IMR-90 (cell line): ENCODE measurements at regions of chr2 and their contacts with region 1.

Region 1: DNA sequence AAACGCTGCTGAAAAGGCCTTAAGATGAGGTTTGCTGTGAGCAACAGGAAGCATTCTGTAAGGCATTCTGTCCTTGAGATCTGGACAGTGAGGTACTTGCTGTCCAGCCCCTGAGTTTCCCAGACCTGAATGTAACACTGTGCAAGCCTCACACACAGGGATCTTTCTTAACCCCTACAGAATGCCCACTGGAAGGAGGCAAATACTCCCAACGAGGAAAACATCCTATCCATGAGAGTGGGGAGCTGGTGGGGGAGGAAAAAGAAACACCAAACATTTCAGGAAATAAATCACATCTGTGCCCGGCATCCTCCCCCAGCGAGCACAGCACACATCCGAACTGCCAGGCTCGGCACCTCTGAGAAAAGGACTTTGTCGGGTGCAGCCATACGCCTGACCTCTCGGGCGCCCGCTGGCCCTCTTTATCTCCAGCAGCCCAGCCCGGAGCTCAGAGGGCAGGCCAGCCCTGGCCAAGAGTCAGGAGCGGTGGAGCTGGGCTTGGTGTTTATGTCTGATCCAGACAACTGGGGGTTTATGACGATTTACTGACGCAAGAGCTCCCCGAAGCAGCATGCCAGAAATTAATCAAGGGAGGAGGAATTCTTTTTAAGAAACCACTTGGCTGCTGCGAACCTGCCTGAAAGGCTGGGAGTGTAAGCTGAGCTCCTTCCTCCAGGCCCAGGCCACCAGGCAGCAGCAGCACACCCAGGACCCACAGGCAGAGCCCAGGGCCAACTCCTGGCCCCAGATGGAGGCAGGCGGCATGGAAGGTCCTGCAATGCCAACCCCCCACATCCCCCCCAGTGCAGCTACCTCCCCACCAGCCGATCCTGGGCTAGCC is 72.2 kb downstream of the HDAC4 start:
- DNase-seq: peak; percentile 98
- ATAC-seq: peak; percentile 84
- H3K4me3 ChIP-seq: no peak overlapping the region
- H3K27ac ChIP-seq: peak overlapping the region; percentile 97
- H3K4me1 ChIP-seq: peaks cover 46% of the 10 kb centered on the region
- H3K27me3 ChIP-seq: no peaks in the 10 kb centered on the region
- CTCF ChIP-seq: peak; percentile 26; the same call in 1 of the 2 replicates
- POLR2A ChIP-seq: peak; percentile 73; the same call in 1 of the 2 replicates
- RAD21 ChIP-seq: peak; percentile 40

Region 2: GRCh38 chr2:238974501-238975166 is 353.9 kb before region 1 on chr2:
- CTCF ChIA-PET with region 1: no interaction called
- POLR2A ChIA-PET with region 1: no interaction called
- dilution Hi-C with region 1: no loop called
- in situ Hi-C with region 1: no loop called
- intact Hi-C with region 1: no loop called
- DNase-seq: peak; percentile 92
- ATAC-seq: peak; percentile 62
- H3K4me3 ChIP-seq: no peak overlapping the region
- H3K27ac ChIP-seq: peak overlapping the region; percentile 48; the same call in 1 of the 2 replicates
- H3K4me1 ChIP-seq: peaks cover 10% of the 10 kb centered on the region
- H3K27me3 ChIP-seq: no peaks in the 10 kb centered on the region; the same call in 1 of the 2 replicates
- CTCF ChIP-seq: peak; percentile 51
- POLR2A ChIP-seq: no peak
- RAD21 ChIP-seq: 0 out of 2 replicates have a peak, but pooled peaks have one; percentile 25

Region 3: GRCh38 chr2:239234191-239235175 is 94.1 kb before region 1 on chr2:
- CTCF ChIA-PET with region 1: no interaction called
- POLR2A ChIA-PET with region 1: no interaction called
- dilution Hi-C with region 1: no loop called
- in situ Hi-C with region 1: no loop called
- intact Hi-C with region 1: no loop called
- DNase-seq: no peak
- ATAC-seq: no peak
- H3K4me3 ChIP-seq: no peak overlapping the region
- H3K27ac ChIP-seq: no peak overlapping the region
- H3K4me1 ChIP-seq: peaks cover under 1% of the 10 kb centered on the region; the same call in 1 of the 2 replicates
- H3K27me3 ChIP-seq: no peaks in the 10 kb centered on the region
- CTCF ChIP-seq: no peak
- POLR2A ChIP-seq: no peak
- RAD21 ChIP-seq: no peak

Region 4: DNA sequence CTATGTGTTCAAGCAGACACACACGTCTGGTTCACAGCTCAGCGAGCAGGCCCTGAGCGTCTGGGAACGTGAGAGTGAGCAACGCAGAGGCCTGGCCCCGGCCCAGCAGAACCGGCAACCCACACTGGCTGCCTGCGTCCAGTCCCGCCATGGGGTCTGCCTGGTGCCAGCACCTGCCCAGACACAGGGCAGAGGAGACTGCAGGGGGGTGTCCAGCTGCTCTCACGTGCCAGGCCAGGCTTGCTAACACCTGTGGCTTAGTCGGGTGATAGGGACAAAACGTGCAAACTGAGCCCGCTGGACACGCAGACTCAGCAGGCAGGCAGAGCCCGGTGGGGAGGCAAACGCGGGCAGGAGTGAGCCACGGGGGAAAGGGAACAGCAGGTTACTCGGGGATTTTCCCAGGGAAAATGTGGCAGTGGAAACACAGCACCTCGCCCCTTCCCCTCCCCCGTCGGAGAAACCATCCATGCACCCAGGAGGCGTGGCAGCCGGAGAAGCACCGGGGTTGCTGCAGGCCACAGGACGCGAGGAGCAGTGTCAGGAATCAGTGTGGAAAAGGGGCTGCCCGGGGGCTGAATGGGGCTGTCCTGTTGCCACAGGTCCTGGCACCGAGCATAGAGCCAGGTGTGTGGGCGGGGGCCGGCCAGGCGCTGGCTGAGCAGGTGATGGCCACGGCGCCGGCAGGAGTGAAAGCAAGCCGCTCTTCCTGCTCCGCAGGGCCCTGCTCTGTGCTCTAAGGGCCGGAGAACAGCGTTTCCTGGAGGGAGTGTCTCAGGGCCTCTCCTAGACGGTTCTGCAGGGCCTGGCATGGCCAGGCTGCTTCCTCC is 82.5 kb before region 1 on chr2:
- CTCF ChIA-PET with region 1: no interaction called
- POLR2A ChIA-PET with region 1: no interaction called
- dilution Hi-C with region 1: no loop called
- in situ Hi-C with region 1: no loop called
- intact Hi-C with region 1: no loop called
- DNase-seq: no peak
- ATAC-seq: no peak
- H3K4me3 ChIP-seq: no peak overlapping the region
- H3K27ac ChIP-seq: no peak overlapping the region
- H3K4me1 ChIP-seq: peaks cover 13% of the 10 kb centered on the region
- H3K27me3 ChIP-seq: no peaks in the 10 kb centered on the region
- CTCF ChIP-seq: no peak
- POLR2A ChIP-seq: no peak
- RAD21 ChIP-seq: no peak

Region 5: DNA sequence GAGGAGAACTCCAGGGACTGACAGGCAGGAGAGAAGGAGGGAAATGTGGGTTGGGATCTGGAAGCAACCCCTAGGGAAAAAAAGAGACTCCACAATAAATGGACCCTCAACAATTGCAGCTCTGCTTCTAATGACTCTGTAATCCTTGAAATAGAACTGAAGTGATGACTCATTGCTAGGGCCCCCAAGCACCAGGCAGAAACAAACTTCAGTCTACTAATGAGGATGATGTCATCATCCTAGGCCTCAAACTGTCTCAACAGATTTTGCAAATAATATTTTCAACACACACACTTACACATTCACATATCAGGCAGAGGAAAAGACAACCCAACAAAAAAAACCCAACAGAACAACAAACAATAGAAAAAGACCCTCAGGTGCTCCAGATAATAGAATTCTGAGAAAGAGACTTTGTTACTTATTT is 71.0 kb before region 1 on chr2:
- CTCF ChIA-PET with region 1: no interaction called
- POLR2A ChIA-PET with region 1: no interaction called
- dilution Hi-C with region 1: no loop called
- in situ Hi-C with region 1: no loop called
- intact Hi-C with region 1: loop called (anchors 2 kb)
- DNase-seq: peak; percentile 96
- ATAC-seq: peak; percentile 90
- H3K4me3 ChIP-seq: no peak overlapping the region
- H3K27ac ChIP-seq: peak overlapping the region; percentile 72
- H3K4me1 ChIP-seq: peaks cover 12% of the 10 kb centered on the region
- H3K27me3 ChIP-seq: no peaks in the 10 kb centered on the region
- CTCF ChIP-seq: no peak
- POLR2A ChIP-seq: no peak
- RAD21 ChIP-seq: 0 out of 2 replicates have a peak, but pooled peaks have one; percentile 25

Region 6: GRCh38 chr2:239355139-239355538 is 26.6 kb after region 1 on chr2:
- CTCF ChIA-PET with region 1: no interaction called
- POLR2A ChIA-PET with region 1: no interaction called
- dilution Hi-C with region 1: no loop called
- in situ Hi-C with region 1: no loop called
- intact Hi-C with region 1: loop called (anchors 1 kb)
- DNase-seq: peak; percentile 80
- ATAC-seq: peak; percentile 79
- H3K4me3 ChIP-seq: no peak overlapping the region
- H3K27ac ChIP-seq: no peak overlapping the region
- H3K4me1 ChIP-seq: peaks cover 9% of the 10 kb centered on the region
- H3K27me3 ChIP-seq: no peaks in the 10 kb centered on the region
- CTCF ChIP-seq: no peak
- POLR2A ChIP-seq: no peak
- RAD21 ChIP-seq: no peak

Region 7: DNA sequence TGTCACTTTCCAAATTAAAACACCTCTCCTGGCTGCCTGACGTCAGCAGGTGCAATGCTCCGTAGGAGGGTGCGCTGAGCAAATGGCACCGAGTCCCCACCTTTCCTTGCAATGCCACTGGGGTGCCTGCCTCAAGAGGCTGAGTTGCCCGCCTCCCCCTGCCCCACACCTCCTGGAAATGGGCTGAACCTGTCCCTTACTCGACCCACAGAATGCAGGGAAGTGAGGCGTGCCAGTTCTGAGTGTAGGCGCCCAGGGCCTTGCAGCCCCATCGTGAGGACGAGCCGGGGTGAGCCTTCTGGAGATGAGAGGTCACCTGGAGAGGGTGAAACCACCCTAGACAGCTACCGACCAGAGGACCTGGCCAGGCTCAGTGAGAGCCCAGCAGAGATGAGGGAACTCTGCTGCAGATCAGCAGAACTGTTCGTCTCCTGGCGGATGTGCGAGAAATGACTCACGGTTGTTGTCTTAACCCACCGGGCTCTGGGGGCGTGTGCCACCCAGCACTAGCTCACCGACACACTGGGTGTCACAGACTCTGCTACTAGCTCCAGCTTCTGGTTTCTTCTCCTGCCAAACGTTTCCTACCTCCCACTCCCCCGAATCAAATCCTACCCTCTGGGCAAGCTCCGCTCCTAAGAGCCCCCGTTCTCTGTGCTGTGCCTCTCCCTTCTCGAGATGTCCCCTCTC is 241.0 kb after region 1 on chr2:
- CTCF ChIA-PET with region 1: no interaction called
- POLR2A ChIA-PET with region 1: no interaction called
- dilution Hi-C with region 1: no loop called
- in situ Hi-C with region 1: no loop called
- intact Hi-C with region 1: no loop called
- DNase-seq: no peak
- ATAC-seq: no peak
- H3K4me3 ChIP-seq: no peak overlapping the region
- H3K27ac ChIP-seq: no peak overlapping the region
- H3K4me1 ChIP-seq: no peaks in the 10 kb centered on the region
- H3K27me3 ChIP-seq: no peaks in the 10 kb centered on the region
- CTCF ChIP-seq: no peak
- POLR2A ChIP-seq: no peak
- RAD21 ChIP-seq: no peak